CD8-positive, alpha-beta T cell (primary cell): ENCODE measurements at regions of chr4 and their contacts with region 1.

Region 1: DNA sequence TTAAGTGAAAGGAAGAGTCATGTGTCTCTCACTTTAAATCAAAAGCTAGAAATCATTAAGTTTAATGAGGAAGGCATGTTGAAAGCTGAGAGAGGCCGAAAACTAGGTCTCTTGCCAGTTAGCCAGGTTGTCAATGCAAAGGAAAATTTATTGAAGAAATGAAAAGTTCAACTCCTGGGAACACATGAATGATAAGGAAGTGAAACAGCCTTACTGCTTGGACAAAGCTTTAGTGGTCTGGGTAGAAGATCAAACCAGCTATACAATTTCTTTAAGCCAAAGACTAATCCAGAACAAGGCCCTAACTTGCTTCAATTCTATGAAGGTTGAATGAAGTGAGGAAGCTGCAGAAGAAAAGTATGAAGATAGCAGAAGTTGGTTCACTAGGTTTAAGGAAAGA is 24.9 kb downstream of the RHOH start:
- DNase-seq: no peak
- ATAC-seq: no peak
- H3K4me3 ChIP-seq: no peak overlapping the region
- H3K4me3 Mint-ChIP-seq: peak overlapping the region; percentile 71
- H3K27ac ChIP-seq: peak overlapping the region in 1 of 2 experiments; percentile 96
- H3K27ac Mint-ChIP-seq: peak overlapping the region; percentile 87
- H3K4me1 ChIP-seq: peaks cover 97% of the 10 kb centered on the region
- H3K4me1 Mint-ChIP-seq: peaks cover 93% of the 10 kb centered on the region
- H3K27me3 ChIP-seq: no peaks in the 10 kb centered on the region
- H3K27me3 Mint-ChIP-seq: no peaks in the 10 kb centered on the region
- CTCF ChIP-seq: no peak

Region 2: GRCh38 chr4:38243388-38244053 is 1978.2 kb before region 1 on chr4:
- CTCF ChIA-PET with region 1: no interaction called
- POLR2A ChIA-PET with region 1: no interaction called
- intact Hi-C with region 1: no loop called
- DNase-seq: no peak
- ATAC-seq: no peak
- H3K4me3 ChIP-seq: no peak overlapping the region
- H3K4me3 Mint-ChIP-seq: no peak overlapping the region
- H3K27ac ChIP-seq: no peak overlapping the region
- H3K27ac Mint-ChIP-seq: no peak overlapping the region
- H3K4me1 ChIP-seq: peaks cover 10% of the 10 kb centered on the region
- H3K4me1 Mint-ChIP-seq: no peaks in the 10 kb centered on the region
- H3K27me3 ChIP-seq: peaks cover 0 to 5% of the 10 kb centered on the region in 2 experiments
- H3K27me3 Mint-ChIP-seq: no peaks in the 10 kb centered on the region
- CTCF ChIP-seq: no peak

Region 3: GRCh38 chr4:39994406-39994805 is 227.3 kb before region 1 on chr4:
- CTCF ChIA-PET with region 1: no interaction called
- POLR2A ChIA-PET with region 1: no interaction called
- intact Hi-C with region 1: no loop called
- DNase-seq: no peak
- ATAC-seq: no peak
- H3K4me3 ChIP-seq: no peak overlapping the region
- H3K4me3 Mint-ChIP-seq: no peak overlapping the region
- H3K27ac ChIP-seq: no peak overlapping the region
- H3K27ac Mint-ChIP-seq: no peak overlapping the region
- H3K4me1 ChIP-seq: no peaks in the 10 kb centered on the region
- H3K4me1 Mint-ChIP-seq: no peaks in the 10 kb centered on the region
- H3K27me3 ChIP-seq: no peaks in the 10 kb centered on the region
- H3K27me3 Mint-ChIP-seq: no peaks in the 10 kb centered on the region
- CTCF ChIP-seq: no peak

Region 4: DNA sequence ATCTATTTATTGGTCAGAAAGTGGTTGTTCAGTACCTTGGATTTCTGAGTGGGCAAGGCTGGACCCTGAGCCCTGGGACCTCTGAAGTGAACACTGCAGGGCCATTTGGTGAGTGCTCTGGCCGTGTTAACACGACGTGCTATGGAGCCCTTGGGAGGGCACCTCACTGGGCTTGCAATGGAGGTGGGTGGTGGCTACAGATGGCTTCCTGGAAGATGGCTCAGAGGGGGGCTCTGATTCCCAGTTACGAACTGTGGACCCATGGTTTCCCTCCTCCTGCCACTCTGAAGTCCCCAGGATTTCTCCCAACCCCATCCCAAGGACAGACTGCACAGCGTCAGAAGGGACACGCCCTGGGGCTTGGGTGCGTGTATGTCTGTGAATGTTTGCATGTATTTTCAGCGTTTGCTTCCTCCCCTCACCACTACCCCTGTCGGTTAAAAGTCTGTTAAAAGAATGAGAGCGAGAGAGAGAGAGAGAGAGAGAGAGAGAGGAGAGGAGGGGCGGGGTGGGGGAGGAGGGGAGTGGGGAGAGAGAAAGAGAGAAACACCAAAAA is 28.6 kb before region 1 on chr4:
- CTCF ChIA-PET with region 1: interaction called, 5 read pairs
- POLR2A ChIA-PET with region 1: interaction called, 93 read pairs
- intact Hi-C with region 1: no loop called
- DNase-seq: peak in 6 of 9 experiments; percentile 49 to 82 (median 65)
- ATAC-seq: peak; percentile 14
- H3K4me3 ChIP-seq: peak overlapping the region; percentile 36 to 42
- H3K4me3 Mint-ChIP-seq: peak overlapping the region; percentile 100
- H3K27ac ChIP-seq: peak overlapping the region; percentile 60 to 96
- H3K27ac Mint-ChIP-seq: peak overlapping the region; percentile 100
- H3K4me1 ChIP-seq: peaks cover 52% of the 10 kb centered on the region
- H3K4me1 Mint-ChIP-seq: peaks cover 64% of the 10 kb centered on the region
- H3K27me3 ChIP-seq: no peaks in the 10 kb centered on the region
- H3K27me3 Mint-ChIP-seq: no peaks in the 10 kb centered on the region
- CTCF ChIP-seq: no peak

Region 5: DNA sequence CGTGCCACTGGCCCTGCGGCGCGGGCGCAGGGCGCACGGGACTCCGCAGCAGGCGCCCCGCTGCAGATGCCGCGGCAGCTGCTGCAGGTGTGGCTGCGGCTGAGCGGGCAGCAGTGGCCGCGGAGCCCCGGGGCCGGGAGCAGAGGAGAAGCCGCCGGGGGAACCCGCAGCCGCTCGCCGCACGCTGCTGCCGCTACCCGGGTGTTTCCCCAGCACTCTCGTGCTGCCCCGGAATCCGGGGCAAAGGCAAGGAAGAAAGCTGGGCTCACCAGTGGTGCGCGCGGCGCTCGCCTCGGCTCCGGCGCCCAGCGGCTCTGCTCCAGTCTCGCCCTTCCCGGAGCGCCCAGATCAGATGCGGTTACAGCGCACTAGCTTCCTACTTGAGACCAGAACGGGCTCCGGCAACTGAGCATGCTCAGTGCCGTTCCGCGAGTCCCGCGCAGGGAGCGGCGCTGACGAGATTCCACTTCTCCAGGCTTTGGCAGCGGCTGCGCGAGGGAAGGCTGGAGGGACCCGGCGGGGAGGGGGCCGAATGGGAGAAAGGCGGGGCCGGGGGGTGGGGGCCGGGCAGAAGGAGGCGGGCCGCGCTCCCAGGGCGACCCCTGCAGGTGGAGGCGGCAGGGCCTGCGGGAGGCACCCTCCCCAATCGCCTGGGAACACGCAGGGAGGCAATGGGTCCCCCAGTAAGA is 992.5 kb after region 1 on chr4 and contains the start of gene APBB2:
- CTCF ChIA-PET with region 1: no interaction called
- POLR2A ChIA-PET with region 1: no interaction called
- intact Hi-C with region 1: no loop called
- DNase-seq: peak in 3 of 9 experiments; percentile 3 to 49 (median 20)
- ATAC-seq: no peak
- H3K4me3 ChIP-seq: peak within 1 kb of the TSS; percentile 45 to 48
- H3K4me3 Mint-ChIP-seq: peak within 1 kb of the TSS; percentile 61
- H3K27ac ChIP-seq: no peak within 1 kb of the TSS
- H3K27ac Mint-ChIP-seq: no peak within 1 kb of the TSS
- H3K4me1 ChIP-seq: no peaks in the 10 kb centered on the region
- H3K4me1 Mint-ChIP-seq: peaks cover 19% of the 10 kb centered on the region
- H3K27me3 ChIP-seq: peaks cover 0 to 7% of the 10 kb centered on the region in 2 experiments
- H3K27me3 Mint-ChIP-seq: peaks cover 59% of the 10 kb centered on the region
- CTCF ChIP-seq: no peak
- total RNA-seq, gene APBB2: 0.33 TPM in 1 of 2 experiments, not detected in the other